ENCODE measurements at regions of chr16 and their contacts with region 1.

Region 1: GRCh38 chr16:75519881-75520280 is 16.0 kb downstream of the CHST5 start:
- DNase-seq: no peak
- H3K4me3 ChIP-seq: no peak overlapping the region
- H3K27ac ChIP-seq: no peak overlapping the region
- H3K27me3 ChIP-seq: peaks cover 3% of the 10 kb centered on the region
- CTCF ChIP-seq: no peak

Region 2: GRCh38 chr16:75198135-75198600 is 321.7 kb before region 1 on chr16:
- CTCF ChIA-PET with region 1: interaction called, 17 read pairs
- POLR2A ChIA-PET with region 1: no interaction called
- DNase-seq: peak; percentile 61
- H3K4me3 ChIP-seq: peak overlapping the region; percentile 22
- H3K27ac ChIP-seq: peak overlapping the region; percentile 21
- H3K27me3 ChIP-seq: peaks cover 8% of the 10 kb centered on the region
- CTCF ChIP-seq: no peak

Region 3: DNA sequence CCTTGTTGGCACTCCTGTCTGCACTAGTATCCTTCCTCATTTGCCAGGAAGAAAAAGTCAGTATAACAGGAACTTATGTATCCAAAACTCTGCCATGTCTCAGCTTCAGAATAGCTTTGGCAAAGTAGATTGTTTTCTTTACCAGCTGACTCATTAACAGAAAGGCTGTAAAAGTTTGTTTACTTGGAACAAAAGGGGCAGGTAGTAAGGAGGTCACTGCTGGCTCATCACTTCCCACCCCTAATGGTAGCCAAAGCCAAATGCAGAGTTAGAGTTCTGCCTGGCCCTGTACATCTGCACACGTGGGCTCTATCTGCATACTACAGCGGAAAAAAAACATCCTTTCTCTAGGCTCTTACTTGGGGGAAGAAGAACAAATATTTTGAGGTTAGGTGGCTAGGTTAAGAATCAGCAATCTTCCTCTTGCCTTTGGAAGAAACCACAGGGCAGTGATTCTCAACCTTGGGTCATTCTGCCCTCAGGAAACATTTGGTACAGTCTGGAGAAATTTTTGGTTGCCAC is 177.5 kb before region 1 on chr16:
- CTCF ChIA-PET with region 1: no interaction called
- POLR2A ChIA-PET with region 1: no interaction called
- DNase-seq: no peak
- H3K4me3 ChIP-seq: no peak overlapping the region
- H3K27ac ChIP-seq: no peak overlapping the region
- H3K27me3 ChIP-seq: no peaks in the 10 kb centered on the region
- CTCF ChIP-seq: no peak

Region 4: GRCh38 chr16:75402159-75402820 is 117.6 kb before region 1 on chr16:
- CTCF ChIA-PET with region 1: no interaction called
- POLR2A ChIA-PET with region 1: no interaction called
- DNase-seq: no peak
- H3K4me3 ChIP-seq: no peak overlapping the region
- H3K27ac ChIP-seq: no peak overlapping the region
- H3K27me3 ChIP-seq: no peaks in the 10 kb centered on the region
- CTCF ChIP-seq: no peak

Region 5: DNA sequence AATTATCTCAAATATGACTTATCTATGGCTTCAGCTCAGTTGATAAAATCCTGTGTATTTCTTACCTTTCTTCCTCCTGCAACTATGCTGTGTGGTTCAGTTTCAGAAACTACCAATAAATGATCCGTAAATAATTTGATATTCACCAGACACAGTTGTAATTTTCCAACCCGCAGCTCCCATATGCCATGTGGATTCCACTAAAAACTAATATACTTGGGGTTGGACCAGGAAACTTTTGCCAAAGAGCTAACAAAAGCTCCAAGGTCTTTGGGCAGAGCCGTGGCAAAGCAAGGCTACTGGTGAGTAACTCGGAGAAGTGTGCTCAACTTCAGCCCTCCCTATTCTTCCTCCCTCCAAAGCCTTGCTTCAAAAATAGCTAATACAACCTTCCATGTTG is 22.3 kb before region 1 on chr16:
- CTCF ChIA-PET with region 1: interaction called, 27 read pairs
- POLR2A ChIA-PET with region 1: interaction called, 4 read pairs
- DNase-seq: no peak
- H3K4me3 ChIP-seq: no peak overlapping the region
- H3K27ac ChIP-seq: no peak overlapping the region
- H3K27me3 ChIP-seq: peaks cover 14% of the 10 kb centered on the region
- CTCF ChIP-seq: no peak

Region 6: DNA sequence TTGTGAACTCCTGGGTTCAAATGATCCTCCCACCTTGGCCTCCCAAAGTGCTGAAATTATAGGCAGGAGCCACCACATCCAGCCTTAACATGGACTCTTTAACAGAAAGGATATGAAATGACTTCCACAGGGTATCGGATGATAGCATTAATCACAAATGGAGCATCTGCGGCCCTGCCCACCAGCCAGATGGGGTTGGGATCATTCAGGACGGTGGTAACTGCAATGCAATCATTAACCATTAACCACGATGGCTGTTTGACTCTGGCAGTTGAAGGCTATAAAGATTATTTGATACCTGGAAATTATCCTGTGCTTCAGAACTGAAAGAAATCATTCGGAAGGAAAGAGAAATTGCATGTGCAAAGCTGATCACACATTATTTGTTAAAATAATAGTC is 21.4 kb after region 1 on chr16:
- CTCF ChIA-PET with region 1: interaction called, 12 read pairs
- POLR2A ChIA-PET with region 1: interaction called, 5 read pairs
- DNase-seq: no peak
- H3K4me3 ChIP-seq: no peak overlapping the region
- H3K27ac ChIP-seq: no peak overlapping the region
- H3K27me3 ChIP-seq: no peaks in the 10 kb centered on the region
- CTCF ChIP-seq: no peak

Region 7: DNA sequence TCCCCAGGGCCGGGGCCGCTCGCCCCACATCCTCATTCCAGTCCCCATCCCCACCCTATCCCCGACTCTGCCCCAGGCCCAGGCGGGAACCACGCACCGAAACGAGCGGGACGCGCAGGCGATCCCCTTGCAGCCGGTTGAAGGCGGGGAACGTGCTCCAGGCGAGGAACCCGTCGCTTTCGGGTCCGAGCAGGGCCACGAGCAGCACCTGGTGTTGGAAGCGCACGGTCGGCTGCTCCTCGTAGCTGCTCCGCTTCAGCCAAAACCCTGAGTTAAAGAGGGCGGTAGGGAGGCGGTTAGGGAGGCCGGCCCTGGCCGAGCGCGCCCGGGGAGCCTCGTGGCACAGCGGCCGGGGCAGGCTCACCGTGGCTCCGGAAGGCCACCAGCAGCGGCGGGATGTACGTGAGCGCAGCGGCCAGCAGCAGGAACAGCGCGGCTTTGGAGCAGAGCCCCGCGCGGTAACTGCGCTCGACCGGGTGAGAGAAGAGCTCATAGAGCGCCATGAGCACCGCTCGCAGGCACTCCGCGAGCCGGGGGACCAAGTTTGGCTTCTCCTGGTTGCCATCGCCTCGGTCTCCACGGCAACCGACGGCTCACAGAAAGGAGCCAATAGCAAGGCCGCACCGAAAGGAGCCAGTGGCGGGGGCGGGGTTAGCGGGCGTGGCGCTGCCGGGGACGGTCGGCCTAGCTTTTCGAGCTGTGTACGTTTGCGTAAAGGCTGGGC is 36.0 kb after region 1 on chr16 and contains the start of gene TMEM231:
- CTCF ChIA-PET with region 1: interaction called, 25 read pairs
- POLR2A ChIA-PET with region 1: interaction called, 9 read pairs
- DNase-seq: peak; percentile 51
- H3K4me3 ChIP-seq: peak within 1 kb of the TSS; percentile 76
- H3K27ac ChIP-seq: peak within 1 kb of the TSS; percentile 39
- H3K27me3 ChIP-seq: no peaks in the 10 kb centered on the region
- CTCF ChIP-seq: 0 out of 2 replicates have a peak, but pooled peaks have one; percentile 8
- polyA plus RNA-seq, gene TMEM231: 10.6 and 16.7 TPM in 2 replicates

Region 8: GRCh38 chr16:75593825-75594820 is 74.2 kb after region 1 on chr16:
- CTCF ChIA-PET with region 1: interaction called, 22 read pairs
- POLR2A ChIA-PET with region 1: no interaction called
- DNase-seq: no peak
- H3K4me3 ChIP-seq: no peak overlapping the region
- H3K27ac ChIP-seq: peak overlapping the region; percentile 43
- H3K27me3 ChIP-seq: no peaks in the 10 kb centered on the region
- CTCF ChIP-seq: no peak

Region 9: DNA sequence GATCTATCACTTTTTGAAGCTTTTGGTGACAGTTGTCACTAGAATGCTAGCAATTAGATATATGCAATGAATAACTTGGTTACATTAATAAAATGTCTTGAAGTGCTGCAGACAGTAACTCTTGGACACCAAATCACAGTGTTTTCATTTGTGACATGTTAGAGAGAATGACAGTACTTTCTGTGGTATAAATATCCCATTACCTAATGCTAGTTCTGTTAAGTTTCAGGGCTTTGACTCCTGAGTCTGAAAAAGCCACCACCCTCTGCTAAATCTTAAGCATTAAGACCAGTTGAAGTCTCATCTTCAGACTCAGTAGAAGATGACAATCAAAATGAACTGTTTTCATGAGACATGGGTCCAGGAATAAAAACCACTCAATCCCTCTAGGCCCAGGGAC is 167.5 kb after region 1 on chr16:
- CTCF ChIA-PET with region 1: no interaction called
- POLR2A ChIA-PET with region 1: no interaction called
- DNase-seq: no peak
- H3K4me3 ChIP-seq: no peak overlapping the region
- H3K27ac ChIP-seq: no peak overlapping the region
- H3K27me3 ChIP-seq: no peaks in the 10 kb centered on the region
- CTCF ChIP-seq: no peak

Region 10: DNA sequence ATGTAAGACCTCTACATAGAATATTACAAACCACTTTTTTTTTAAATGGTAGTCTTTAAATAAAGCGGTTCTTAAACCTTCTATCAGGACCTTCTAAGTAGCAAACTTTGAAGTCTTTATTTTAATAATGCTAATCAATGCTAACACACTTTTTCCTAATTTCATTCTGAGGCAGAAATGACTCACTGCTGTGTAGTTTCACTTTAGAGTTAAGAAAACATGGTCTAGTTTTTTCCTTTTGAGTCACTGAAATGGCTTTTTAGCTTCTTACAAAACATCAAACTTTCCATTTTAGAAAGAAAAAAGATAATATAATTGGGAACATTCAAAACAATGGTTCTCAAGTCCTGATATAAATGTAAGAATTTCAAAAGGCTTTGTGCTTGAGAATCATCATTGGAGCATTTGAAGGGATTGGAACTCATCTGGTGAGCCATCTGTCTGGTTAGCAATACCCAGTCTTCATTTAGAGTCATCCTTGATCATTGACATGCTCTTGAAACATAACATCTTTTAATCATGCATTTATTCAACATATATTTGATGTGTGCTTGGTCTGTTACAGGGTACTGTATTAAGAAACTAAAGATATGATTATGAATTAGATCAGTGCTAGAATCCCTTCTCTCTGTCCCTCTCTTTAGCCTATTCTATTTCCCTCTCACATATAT is 1412.8 kb after region 1 on chr16:
- CTCF ChIA-PET with region 1: no interaction called
- POLR2A ChIA-PET with region 1: no interaction called
- DNase-seq: no peak
- H3K4me3 ChIP-seq: no peak overlapping the region
- H3K27ac ChIP-seq: no peak overlapping the region
- H3K27me3 ChIP-seq: no peaks in the 10 kb centered on the region
- CTCF ChIP-seq: no peak

Region 11: GRCh38 chr16:76946879-76947278 is 1427.0 kb after region 1 on chr16:
- CTCF ChIA-PET with region 1: interaction called, 10 read pairs
- POLR2A ChIA-PET with region 1: no interaction called
- DNase-seq: peak; percentile 60
- H3K4me3 ChIP-seq: no peak overlapping the region
- H3K27ac ChIP-seq: no peak overlapping the region
- H3K27me3 ChIP-seq: no peaks in the 10 kb centered on the region
- CTCF ChIP-seq: no peak

Measured in AG04450 (cell line).